ENCODE measurements at regions of chr6 and their contacts with region 1.

Region 1: GRCh38 chr6:105402939-105403935 is at the start of gene PREP:
- DNase-seq: peak; percentile 75 to 80
- ATAC-seq: peak; percentile 86
- H3K4me3 ChIP-seq: peak within 1 kb of the TSS; percentile 63 to 98 (median 90)
- H3K27ac ChIP-seq: peak within 1 kb of the TSS; percentile 84 to 97 (median 88)
- H3K4me1 ChIP-seq: peaks cover 33 to 40% of the 10 kb centered on the region in 2 donors
- H3K27me3 ChIP-seq: no peaks in the 10 kb centered on the region
- CTCF ChIP-seq: peak; percentile 49 to 89 (median 74)
- POLR2A ChIP-seq: peak; percentile 82 to 90
- total RNA-seq, gene PREP: 34.6 to 71.8 (median 51.8) TPM

Region 2: DNA sequence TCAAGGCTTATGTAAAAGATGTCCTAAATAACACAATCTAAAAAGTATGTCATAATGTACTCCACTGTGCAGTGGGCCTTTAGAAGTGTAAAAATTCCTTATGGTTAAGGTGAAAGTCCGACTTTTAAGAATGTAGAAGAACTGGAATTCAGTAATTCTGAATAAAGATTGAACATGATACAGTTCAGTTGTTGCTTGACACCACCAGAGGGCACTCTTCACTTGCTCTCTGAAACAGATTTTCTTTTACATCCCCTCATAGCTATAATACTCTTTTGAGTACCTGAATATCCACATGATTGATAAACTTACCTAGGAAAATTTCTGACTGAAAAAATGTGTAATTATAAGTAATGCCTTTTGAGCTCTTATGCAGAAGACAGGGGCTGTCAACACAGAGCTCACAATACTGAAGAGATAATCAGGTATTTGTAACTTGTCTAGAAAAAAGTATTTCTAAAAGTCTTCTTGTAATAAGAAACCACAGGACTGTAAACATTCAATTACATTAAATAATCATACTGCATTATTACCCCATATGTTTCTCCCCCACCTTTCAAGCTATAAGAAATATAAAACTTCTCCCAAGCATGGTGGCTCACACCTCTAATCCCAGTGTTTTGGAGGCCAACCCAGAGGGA is 315.5 kb before region 1 on chr6:
- in situ Hi-C with region 1: loop called in 3 of 4 experiments (anchors 5 to 10 kb)
- intact Hi-C with region 1: loop called (anchors 1 kb)
- DNase-seq: peak in 1 of 2 donors; percentile 21
- ATAC-seq: peak; percentile 71 to 74
- H3K4me3 ChIP-seq: no peak overlapping the region
- H3K27ac ChIP-seq: no peak overlapping the region
- H3K4me1 ChIP-seq: peaks cover 4 to 5% of the 10 kb centered on the region in 2 donors
- H3K27me3 ChIP-seq: no peaks in the 10 kb centered on the region
- CTCF ChIP-seq: peak; percentile 75 to 88 (median 82)
- POLR2A ChIP-seq: no peak

Region 3: GRCh38 chr6:105097288-105097687 is 305.9 kb before region 1 on chr6:
- in situ Hi-C with region 1: loop called in 2 of 4 experiments (anchors 10 kb)
- intact Hi-C with region 1: loop called (anchors 5 kb)
- DNase-seq: no peak
- ATAC-seq: no peak
- H3K4me3 ChIP-seq: no peak overlapping the region
- H3K27ac ChIP-seq: peak overlapping the region in 1 of 4 donors; percentile 44
- H3K4me1 ChIP-seq: peaks cover 9 to 13% of the 10 kb centered on the region in 2 donors
- H3K27me3 ChIP-seq: no peaks in the 10 kb centered on the region
- CTCF ChIP-seq: no peak
- POLR2A ChIP-seq: no peak

Region 4: GRCh38 chr6:105278813-105279212 is 124.4 kb before region 1 on chr6:
- in situ Hi-C with region 1: no loop called
- intact Hi-C with region 1: loop called (anchors 2 kb)
- DNase-seq: peak; percentile 69 to 81
- ATAC-seq: peak; percentile 67 to 71
- H3K4me3 ChIP-seq: peak overlapping the region; percentile 47 to 71 (median 68)
- H3K27ac ChIP-seq: peak overlapping the region; percentile 87 to 98 (median 96)
- H3K4me1 ChIP-seq: peaks cover 52 to 69% of the 10 kb centered on the region in 2 donors
- H3K27me3 ChIP-seq: no peaks in the 10 kb centered on the region
- CTCF ChIP-seq: peak in 1 of 5 experiments; percentile 20
- POLR2A ChIP-seq: peak; percentile 77 to 85

Region 5: GRCh38 chr6:105301072-105301503 is 102.1 kb before region 1 on chr6:
- in situ Hi-C with region 1: no loop called
- intact Hi-C with region 1: no loop called
- DNase-seq: peak; percentile 28 to 58
- ATAC-seq: peak; percentile 85 to 91
- H3K4me3 ChIP-seq: no peak overlapping the region
- H3K27ac ChIP-seq: peak overlapping the region; percentile 74 to 78 (median 76)
- H3K4me1 ChIP-seq: peaks cover 29 to 33% of the 10 kb centered on the region in 2 donors
- H3K27me3 ChIP-seq: no peaks in the 10 kb centered on the region
- CTCF ChIP-seq: no peak
- POLR2A ChIP-seq: no peak

Region 6: GRCh38 chr6:105317607-105318533 is 85.4 kb before region 1 on chr6:
- in situ Hi-C with region 1: no loop called
- intact Hi-C with region 1: loop called (anchors 2 kb)
- DNase-seq: peak; percentile 49 to 57
- ATAC-seq: peak; percentile 79 to 93
- H3K4me3 ChIP-seq: no peak overlapping the region
- H3K27ac ChIP-seq: peak overlapping the region; percentile 11 to 98 (median 58)
- H3K4me1 ChIP-seq: peaks cover 57 to 61% of the 10 kb centered on the region in 2 donors
- H3K27me3 ChIP-seq: no peaks in the 10 kb centered on the region
- CTCF ChIP-seq: peak; percentile 27 to 60 (median 48)
- POLR2A ChIP-seq: no peak

Region 7: GRCh38 chr6:105363100-105363754 is 40.0 kb before region 1 on chr6:
- in situ Hi-C with region 1: no loop called
- intact Hi-C with region 1: loop called (anchors 5 kb)
- DNase-seq: peak in 1 of 2 donors; percentile 32
- ATAC-seq: peak; percentile 39 to 62
- H3K4me3 ChIP-seq: no peak overlapping the region
- H3K27ac ChIP-seq: peak overlapping the region; percentile 63 to 74 (median 67)
- H3K4me1 ChIP-seq: peaks cover 27 to 29% of the 10 kb centered on the region in 2 donors
- H3K27me3 ChIP-seq: no peaks in the 10 kb centered on the region
- CTCF ChIP-seq: peak in 4 of 5 experiments; percentile 31 to 37 (median 35)
- POLR2A ChIP-seq: no peak

Region 8: DNA sequence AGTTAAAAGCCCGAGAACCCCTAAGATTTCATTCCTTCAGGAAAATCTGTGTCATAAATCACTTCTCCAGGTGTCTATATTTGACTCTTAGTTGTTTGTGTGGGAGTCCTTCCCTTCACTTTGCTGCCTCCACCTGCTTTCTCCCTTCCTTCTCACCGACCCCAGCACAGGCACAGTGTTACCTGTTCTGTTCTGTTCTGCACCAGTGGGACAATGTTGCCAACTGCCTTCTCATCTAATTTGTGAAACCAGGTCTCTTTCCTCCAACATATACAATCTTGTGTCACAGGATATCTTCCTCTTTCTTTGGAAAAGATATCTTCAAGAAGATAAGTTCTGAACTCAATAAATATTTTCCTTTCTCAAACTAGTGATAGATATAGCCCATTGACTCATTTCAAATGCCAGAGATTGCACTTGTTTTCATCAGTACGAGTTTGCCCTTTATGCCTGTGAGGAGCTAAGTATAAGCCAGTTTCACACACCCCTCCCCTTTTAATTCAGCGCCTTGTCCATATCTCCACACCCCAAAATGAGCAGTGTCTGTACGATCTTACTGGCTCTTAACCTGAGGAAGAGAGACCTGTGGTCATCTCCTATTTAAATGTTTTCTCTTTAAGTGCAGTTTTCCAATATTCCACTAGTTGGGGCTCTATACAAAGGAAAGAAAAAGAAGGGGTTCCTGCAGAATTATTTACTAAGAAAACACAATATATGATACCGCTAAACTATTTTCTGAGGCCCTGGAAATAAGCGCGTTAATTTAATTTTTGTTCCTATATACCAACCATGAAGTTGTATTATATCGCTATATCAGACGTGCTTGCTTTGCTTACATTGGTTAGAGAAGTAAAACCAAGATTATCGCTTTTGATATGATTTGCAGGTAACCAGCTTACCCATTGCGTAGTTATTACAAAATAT is 81.3 kb after region 1 on chr6:
- in situ Hi-C with region 1: no loop called
- intact Hi-C with region 1: no loop called
- DNase-seq: no peak
- ATAC-seq: peak in 1 of 2 donors; percentile 46
- H3K4me3 ChIP-seq: no peak overlapping the region
- H3K27ac ChIP-seq: no peak overlapping the region
- H3K4me1 ChIP-seq: peaks cover 0 to 3% of the 10 kb centered on the region in 2 donors
- H3K27me3 ChIP-seq: no peaks in the 10 kb centered on the region
- CTCF ChIP-seq: peak; percentile 61 to 89 (median 77)
- POLR2A ChIP-seq: no peak